ENCODE measurements at regions of chr1 and their contacts with region 1.

Region 1: GRCh38 chr1:223556414-223557129 is 108.9 kb downstream of the CAPN8 start:
- H3K4me3 ChIP-seq: no peak overlapping the region
- H3K27ac ChIP-seq: no peak overlapping the region
- H3K4me1 ChIP-seq: no peaks in the 10 kb centered on the region
- CTCF ChIP-seq: no peak

Region 2: DNA sequence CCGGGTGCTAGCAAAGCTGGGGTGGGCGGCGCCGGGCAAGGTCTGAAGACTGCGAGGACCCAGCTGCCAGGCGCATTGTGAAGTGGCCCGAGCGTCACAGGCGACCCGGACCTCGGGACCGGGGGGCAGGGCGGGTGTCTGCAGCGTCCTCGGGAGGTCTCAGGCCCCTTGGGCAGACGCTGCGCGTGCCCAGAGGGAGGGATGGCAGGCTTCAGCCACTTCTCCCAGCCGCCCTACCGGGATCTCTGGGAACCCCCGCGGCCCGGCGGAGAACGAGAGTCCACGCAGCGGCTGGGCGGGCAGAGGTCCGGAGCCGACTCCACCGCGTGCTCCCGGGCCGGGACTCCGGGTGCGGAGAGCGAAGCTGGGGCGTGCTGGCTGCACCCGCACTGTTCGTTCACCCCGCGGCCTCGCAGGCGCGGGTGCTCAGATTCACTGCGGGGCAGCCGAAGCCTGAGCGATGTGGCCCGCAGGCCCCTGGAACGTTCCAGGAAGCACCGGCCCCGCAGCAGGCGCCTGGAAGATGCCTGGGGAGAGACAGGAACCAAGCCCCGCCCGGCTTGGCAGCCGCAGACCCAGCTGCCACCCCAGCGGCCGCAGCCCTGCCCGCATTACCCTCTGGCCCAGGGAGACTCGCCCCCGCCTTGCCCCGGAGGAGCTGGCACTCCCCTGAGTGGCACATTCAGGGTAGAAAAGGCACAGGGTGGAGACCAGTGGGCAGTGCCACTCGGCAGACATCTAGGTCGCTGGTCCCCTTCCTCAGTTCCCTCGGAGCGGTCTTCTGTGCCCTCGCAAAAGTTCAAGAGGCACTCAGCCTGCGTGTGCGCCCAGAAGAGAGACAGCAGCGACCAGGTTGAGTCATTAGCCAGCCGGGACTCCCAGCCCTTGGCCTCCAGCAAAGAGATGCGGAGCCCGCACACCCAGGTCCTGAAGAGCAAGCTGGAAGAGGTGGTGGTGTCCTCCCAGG is 163.0 kb before region 1 on chr1 and contains the start of gene CCDC185:
- CTCF ChIA-PET with region 1: no interaction called
- POLR2A ChIA-PET with region 1: no interaction called
- H3K4me3 ChIP-seq: no peak within 1 kb of the TSS; the same call in 1 of the 2 replicates
- H3K27ac ChIP-seq: no peak within 1 kb of the TSS
- H3K4me1 ChIP-seq: no peaks in the 10 kb centered on the region
- CTCF ChIP-seq: no peak

Region 3: DNA sequence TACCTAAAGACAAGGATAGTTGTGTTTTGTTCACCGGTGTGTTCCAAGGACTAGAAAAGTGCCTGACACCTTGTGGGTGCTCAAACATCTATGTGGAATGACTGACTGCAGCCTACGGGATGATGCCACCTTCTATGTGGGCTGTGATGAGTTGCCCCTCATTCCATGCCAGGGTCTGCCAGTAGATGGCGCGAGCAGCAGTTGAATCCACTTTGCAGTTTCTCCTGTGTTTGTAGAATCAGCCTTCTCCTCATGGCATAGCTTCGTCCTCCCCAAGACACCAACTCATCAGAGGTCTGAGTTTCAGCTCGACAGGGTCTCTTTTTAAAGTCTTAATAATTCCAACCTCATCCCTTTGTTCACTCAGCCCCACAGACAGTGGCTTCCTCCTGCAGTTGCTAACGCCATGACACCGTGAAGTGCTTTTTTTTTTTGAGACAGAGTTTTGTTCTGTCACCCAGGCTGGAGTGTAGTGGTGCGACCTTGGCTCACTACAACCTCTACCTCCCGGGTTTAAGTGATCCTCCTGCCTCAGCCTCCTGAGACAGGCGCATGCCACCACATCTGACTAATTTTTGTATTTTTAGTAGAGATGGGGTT is 24.7 kb before region 1 on chr1:
- CTCF ChIA-PET with region 1: interaction called, 14 read pairs
- POLR2A ChIA-PET with region 1: no interaction called
- H3K4me3 ChIP-seq: no peak overlapping the region
- H3K27ac ChIP-seq: no peak overlapping the region
- H3K4me1 ChIP-seq: no peaks in the 10 kb centered on the region
- CTCF ChIP-seq: peak; percentile 76; the same call in 1 of the 2 replicates

Region 4: GRCh38 chr1:223538981-223539380 is 17.6 kb before region 1 on chr1:
- CTCF ChIA-PET with region 1: interaction called, 23 read pairs
- POLR2A ChIA-PET with region 1: no interaction called
- H3K4me3 ChIP-seq: no peak overlapping the region
- H3K27ac ChIP-seq: no peak overlapping the region
- H3K4me1 ChIP-seq: no peaks in the 10 kb centered on the region
- CTCF ChIP-seq: no peak

Region 5: DNA sequence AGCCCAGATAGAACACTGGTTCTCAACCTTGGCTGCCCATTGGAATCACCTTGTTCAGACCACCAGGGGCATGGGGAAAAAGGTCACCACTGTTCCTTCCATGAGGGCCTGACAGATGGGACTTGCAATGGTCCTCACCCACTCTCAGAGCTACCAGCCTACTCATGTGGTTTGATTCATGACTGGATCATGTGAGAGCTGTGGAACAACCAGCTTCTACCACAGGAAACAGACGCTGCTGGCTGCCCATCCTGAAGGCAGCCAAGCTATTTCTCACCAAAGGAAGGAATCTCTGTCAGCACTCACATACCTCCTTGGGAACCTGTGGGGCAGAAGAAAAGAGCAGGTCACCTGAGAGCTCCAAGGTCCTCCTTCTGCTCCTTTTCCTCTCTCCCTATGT is 55.4 kb after region 1 on chr1:
- CTCF ChIA-PET with region 1: interaction called, 96 read pairs
- POLR2A ChIA-PET with region 1: no interaction called
- H3K4me3 ChIP-seq: no peak overlapping the region
- H3K27ac ChIP-seq: no peak overlapping the region
- H3K4me1 ChIP-seq: no peaks in the 10 kb centered on the region
- CTCF ChIP-seq: no peak

Region 6: GRCh38 chr1:223621312-223621734 is 64.8 kb after region 1 on chr1:
- CTCF ChIA-PET with region 1: interaction called, 35 read pairs
- POLR2A ChIA-PET with region 1: no interaction called
- H3K4me3 ChIP-seq: no peak overlapping the region
- H3K27ac ChIP-seq: no peak overlapping the region
- H3K4me1 ChIP-seq: no peaks in the 10 kb centered on the region
- CTCF ChIP-seq: no peak

Region 7: GRCh38 chr1:223628233-223629125 is 71.9 kb after region 1 on chr1:
- CTCF ChIA-PET with region 1: interaction called, 32 read pairs
- POLR2A ChIA-PET with region 1: no interaction called
- H3K4me3 ChIP-seq: no peak overlapping the region
- H3K27ac ChIP-seq: no peak overlapping the region
- H3K4me1 ChIP-seq: no peaks in the 10 kb centered on the region
- CTCF ChIP-seq: peak; percentile 54

Region 8: DNA sequence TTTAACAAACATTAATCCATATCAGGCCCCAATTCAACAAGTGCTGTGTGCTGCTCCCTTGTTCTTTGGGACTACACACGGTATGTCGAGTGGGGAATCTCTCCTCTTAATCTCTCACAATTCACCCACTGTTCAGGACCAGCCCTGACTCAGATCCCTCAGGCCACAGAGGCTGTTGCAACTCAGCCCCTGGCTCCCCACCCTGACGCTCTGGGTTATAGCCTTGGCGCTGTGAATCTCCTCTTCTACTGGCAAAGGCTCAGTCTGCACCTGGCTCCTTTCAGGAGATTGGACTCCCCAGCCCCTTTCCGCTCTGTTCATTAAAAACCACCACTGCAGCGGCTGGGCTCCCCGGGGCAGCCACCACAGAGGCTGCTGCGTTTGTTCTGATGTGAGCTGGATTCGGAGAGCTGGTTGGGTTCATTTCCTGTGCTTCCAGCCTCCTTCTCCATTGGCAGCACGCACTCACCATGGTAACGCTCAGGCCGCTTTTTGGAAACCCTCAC is 95.9 kb after region 1 on chr1:
- CTCF ChIA-PET with region 1: interaction called, 11 read pairs
- POLR2A ChIA-PET with region 1: no interaction called
- H3K4me3 ChIP-seq: no peak overlapping the region
- H3K27ac ChIP-seq: no peak overlapping the region
- H3K4me1 ChIP-seq: peaks cover 2% of the 10 kb centered on the region; the same call in 1 of the 2 replicates
- CTCF ChIP-seq: no peak

Region 9: GRCh38 chr1:223860051-223860622 is 303.6 kb after region 1 on chr1:
- CTCF ChIA-PET with region 1: no interaction called
- POLR2A ChIA-PET with region 1: no interaction called
- H3K4me3 ChIP-seq: no peak overlapping the region
- H3K27ac ChIP-seq: no peak overlapping the region
- H3K4me1 ChIP-seq: peaks cover 9% of the 10 kb centered on the region
- CTCF ChIP-seq: no peak

Region 10: DNA sequence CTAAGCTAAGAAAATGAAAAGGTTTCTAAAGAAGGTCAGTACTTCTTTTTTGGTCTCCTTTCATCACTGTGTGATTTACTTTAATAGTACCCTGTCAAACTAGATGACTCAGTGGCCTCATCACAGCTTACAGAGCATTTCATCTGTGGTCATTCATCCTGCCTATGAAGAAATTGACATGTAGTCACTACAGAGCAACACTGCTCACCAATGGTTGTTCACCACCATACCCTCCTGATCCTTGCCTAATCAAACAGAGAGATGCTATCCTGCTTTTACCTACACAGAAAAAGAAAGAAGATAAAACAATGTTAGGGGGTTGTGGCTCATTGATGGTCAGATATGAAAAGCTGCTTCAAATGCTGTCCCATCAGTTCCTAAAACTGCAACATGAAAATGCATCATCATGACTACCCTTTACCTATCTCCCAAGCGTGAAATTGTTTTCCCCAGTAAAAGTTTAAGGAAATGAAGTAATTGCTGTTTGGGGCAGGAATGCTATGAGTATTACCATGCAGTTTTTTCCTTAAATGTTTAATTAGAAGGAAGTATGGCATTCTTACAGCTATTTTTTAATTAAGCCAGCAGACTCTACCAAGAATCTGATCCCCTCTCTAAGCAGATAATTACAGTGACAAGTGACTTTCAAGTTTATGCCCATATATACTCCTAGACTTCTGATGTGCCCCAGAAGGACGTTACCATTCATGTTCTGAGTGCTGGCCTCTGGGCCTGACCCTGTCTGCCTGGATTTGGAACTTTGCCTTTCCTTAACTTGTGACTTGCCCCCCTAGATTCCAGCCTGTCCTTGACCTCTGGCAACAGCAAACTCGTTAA is 511.3 kb after region 1 on chr1:
- CTCF ChIA-PET with region 1: no interaction called
- POLR2A ChIA-PET with region 1: no interaction called
- H3K4me3 ChIP-seq: no peak overlapping the region
- H3K27ac ChIP-seq: no peak overlapping the region
- H3K4me1 ChIP-seq: peaks cover 28% of the 10 kb centered on the region
- CTCF ChIP-seq: no peak